MCF 10A (cell line): ENCODE measurements at regions of chr12 and their contacts with region 1.

Region 1: GRCh38 chr12:80598004-80598606 is 109.3 kb upstream of the MYF6 start:
- DNase-seq: peak; percentile 61
- H3K4me3 Mint-ChIP-seq: no peak overlapping the region
- H3K27ac Mint-ChIP-seq: no peak overlapping the region
- H3K4me1 Mint-ChIP-seq: no peaks in the 10 kb centered on the region
- H3K27me3 Mint-ChIP-seq: peaks cover 30% of the 10 kb centered on the region
- CTCF ChIP-seq: peak; percentile 52

Region 2: GRCh38 chr12:79378496-79378895 is 1219.6 kb before region 1 on chr12:
- CTCF ChIA-PET with region 1: no interaction called
- POLR2A ChIA-PET with region 1: no interaction called
- intact Hi-C with region 1: no loop called
- DNase-seq: no peak
- H3K4me3 Mint-ChIP-seq: no peak overlapping the region
- H3K27ac Mint-ChIP-seq: no peak overlapping the region
- H3K4me1 Mint-ChIP-seq: peaks cover 5% of the 10 kb centered on the region
- H3K27me3 Mint-ChIP-seq: no peaks in the 10 kb centered on the region
- CTCF ChIP-seq: no peak

Region 3: DNA sequence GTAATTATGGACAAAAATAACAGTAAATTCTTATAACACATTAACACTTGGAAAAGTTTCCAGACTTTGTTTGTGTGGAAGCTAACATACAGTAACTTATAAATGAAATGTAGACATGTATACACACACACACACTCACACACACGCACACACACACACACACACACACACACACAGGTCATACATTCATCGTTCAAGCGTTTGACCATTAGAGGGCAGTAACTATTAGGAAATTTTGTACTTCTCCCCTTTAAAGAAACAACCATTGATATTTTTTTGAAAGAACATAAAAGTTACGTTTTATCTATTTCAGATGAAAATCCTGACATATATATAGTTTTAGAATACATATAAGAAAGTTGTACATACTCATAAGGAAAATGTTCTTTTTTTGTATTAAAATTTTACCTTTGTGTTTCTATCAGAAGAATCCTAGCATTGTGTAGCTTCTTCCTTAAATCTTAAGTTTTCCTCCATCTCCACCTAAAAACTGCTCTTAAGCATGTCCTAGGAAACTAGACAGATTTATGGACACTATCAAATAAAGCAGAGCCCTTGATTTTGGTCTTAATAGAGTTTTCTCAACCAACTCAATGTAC is 125.1 kb before region 1 on chr12:
- CTCF ChIA-PET with region 1: interaction called, 49 read pairs
- POLR2A ChIA-PET with region 1: no interaction called
- intact Hi-C with region 1: no loop called
- DNase-seq: peak; percentile 60
- H3K4me3 Mint-ChIP-seq: no peak overlapping the region
- H3K27ac Mint-ChIP-seq: no peak overlapping the region
- H3K4me1 Mint-ChIP-seq: no peaks in the 10 kb centered on the region
- H3K27me3 Mint-ChIP-seq: no peaks in the 10 kb centered on the region
- CTCF ChIP-seq: peak; percentile 39

Region 4: GRCh38 chr12:80551897-80552296 is 46.2 kb before region 1 on chr12:
- CTCF ChIA-PET with region 1: interaction called, 7 read pairs
- POLR2A ChIA-PET with region 1: no interaction called
- intact Hi-C with region 1: loop called (anchors 5 kb)
- DNase-seq: peak; percentile 91
- H3K4me3 Mint-ChIP-seq: no peak overlapping the region
- H3K27ac Mint-ChIP-seq: no peak overlapping the region
- H3K4me1 Mint-ChIP-seq: peaks cover 7% of the 10 kb centered on the region
- H3K27me3 Mint-ChIP-seq: no peaks in the 10 kb centered on the region
- CTCF ChIP-seq: no peak

Region 5: GRCh38 chr12:80763874-80764273 is 165.8 kb after region 1 on chr12:
- CTCF ChIA-PET with region 1: interaction called, 20 read pairs
- POLR2A ChIA-PET with region 1: no interaction called
- intact Hi-C with region 1: loop called (anchors 2 kb)
- DNase-seq: peak; percentile 56
- H3K4me3 Mint-ChIP-seq: no peak overlapping the region
- H3K27ac Mint-ChIP-seq: no peak overlapping the region
- H3K4me1 Mint-ChIP-seq: no peaks in the 10 kb centered on the region
- H3K27me3 Mint-ChIP-seq: peaks cover 65% of the 10 kb centered on the region
- CTCF ChIP-seq: peak; percentile 52

Region 6: GRCh38 chr12:80894179-80894578 is 296.1 kb after region 1 on chr12:
- CTCF ChIA-PET with region 1: no interaction called
- POLR2A ChIA-PET with region 1: no interaction called
- intact Hi-C with region 1: no loop called
- DNase-seq: no peak
- H3K4me3 Mint-ChIP-seq: no peak overlapping the region
- H3K27ac Mint-ChIP-seq: no peak overlapping the region
- H3K4me1 Mint-ChIP-seq: no peaks in the 10 kb centered on the region
- H3K27me3 Mint-ChIP-seq: peaks cover 55% of the 10 kb centered on the region
- CTCF ChIP-seq: no peak

Region 7: GRCh38 chr12:81105687-81106086 is 507.6 kb after region 1 on chr12:
- CTCF ChIA-PET with region 1: no interaction called
- POLR2A ChIA-PET with region 1: no interaction called
- intact Hi-C with region 1: no loop called
- DNase-seq: no peak
- H3K4me3 Mint-ChIP-seq: no peak overlapping the region
- H3K27ac Mint-ChIP-seq: no peak overlapping the region
- H3K4me1 Mint-ChIP-seq: no peaks in the 10 kb centered on the region
- H3K27me3 Mint-ChIP-seq: peaks cover 18% of the 10 kb centered on the region
- CTCF ChIP-seq: no peak